KBM-7 (cell line): ENCODE measurements at regions of chr2 and their contacts with region 1.

Region 1: GRCh38 chr2:118855451-118856279 is 8.2 kb upstream of the EN1 start:
- DNase-seq: peak; percentile 87

Region 2: DNA sequence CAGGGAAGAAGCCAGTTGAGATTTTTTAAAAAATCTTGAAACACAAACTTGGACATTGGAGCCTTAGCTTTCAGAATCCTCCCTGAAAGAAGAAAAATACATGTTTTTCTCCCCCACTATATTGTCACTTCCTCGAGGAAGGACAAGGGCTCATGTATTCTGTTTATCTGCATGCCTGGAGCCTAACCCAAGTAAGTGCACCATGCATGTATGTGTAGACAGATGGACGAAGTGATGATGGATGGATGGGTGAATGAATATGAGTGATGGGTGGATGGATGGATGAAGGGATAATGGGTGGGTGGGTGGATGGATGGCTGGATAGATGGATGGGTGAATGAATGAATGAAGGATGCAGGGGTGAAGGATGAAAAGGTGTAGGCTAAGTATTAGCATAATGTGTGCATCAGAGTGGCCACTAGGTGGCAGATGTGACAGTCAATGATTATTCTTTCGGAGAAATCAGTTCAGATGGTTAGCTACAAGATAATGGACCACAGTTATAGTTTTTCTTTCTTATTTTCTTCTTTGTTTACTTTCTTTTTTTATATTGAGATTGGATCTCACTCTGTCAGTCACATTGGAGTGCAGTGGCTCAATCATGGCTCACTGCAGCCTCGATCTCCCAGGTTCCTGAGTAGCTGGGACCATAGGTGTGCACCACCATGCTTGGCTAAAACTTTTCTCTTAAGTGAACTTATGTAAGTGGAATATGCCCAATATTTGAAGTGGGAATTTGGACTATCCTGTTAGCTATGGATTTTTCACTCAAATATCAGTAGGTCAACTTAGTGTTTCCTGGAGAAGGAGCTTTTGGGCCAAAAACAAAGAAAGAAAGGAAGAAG is 823.3 kb before region 1 on chr2:
- in situ Hi-C with region 1: loop called (anchors 25 kb)
- DNase-seq: peak; percentile 38

Region 3: GRCh38 chr2:118249531-118249930 is 606.1 kb before region 1 on chr2:
- in situ Hi-C with region 1: loop called (anchors 25 kb)
- DNase-seq: peak; percentile 4

Region 4: DNA sequence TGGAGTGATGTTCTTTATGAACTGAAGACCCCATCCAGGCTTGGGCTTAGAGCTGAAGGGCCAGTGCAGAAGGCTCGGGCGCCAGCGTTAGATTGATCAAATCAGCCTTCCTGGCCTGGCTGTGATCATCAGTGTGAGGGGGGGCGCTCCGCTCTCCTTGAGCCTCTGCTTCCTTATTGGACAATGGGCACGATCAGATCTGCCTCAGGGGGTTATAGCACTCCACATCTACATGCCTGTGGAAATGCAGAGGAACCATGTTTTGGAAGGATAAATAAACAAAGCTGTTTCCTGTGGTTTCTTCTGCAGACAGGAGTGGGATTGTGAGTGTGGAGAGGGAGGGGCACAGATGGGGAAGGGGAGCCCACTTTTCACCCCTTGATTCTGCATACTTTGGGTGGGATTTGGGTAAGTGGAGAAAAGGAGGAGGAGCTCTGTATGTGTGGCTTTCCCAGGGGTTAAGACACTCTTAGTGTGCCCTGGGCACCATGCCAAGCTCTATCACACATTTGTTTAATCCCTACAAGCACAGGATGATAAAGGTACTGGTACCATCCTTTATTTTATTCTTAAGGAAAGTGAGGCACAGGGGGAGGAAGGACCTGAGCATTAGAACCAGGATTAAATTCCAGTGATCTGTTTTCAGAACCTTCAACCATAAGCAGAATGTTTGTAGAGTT is 158.7 kb before region 1 on chr2:
- in situ Hi-C with region 1: no loop called
- DNase-seq: no peak

Region 5: DNA sequence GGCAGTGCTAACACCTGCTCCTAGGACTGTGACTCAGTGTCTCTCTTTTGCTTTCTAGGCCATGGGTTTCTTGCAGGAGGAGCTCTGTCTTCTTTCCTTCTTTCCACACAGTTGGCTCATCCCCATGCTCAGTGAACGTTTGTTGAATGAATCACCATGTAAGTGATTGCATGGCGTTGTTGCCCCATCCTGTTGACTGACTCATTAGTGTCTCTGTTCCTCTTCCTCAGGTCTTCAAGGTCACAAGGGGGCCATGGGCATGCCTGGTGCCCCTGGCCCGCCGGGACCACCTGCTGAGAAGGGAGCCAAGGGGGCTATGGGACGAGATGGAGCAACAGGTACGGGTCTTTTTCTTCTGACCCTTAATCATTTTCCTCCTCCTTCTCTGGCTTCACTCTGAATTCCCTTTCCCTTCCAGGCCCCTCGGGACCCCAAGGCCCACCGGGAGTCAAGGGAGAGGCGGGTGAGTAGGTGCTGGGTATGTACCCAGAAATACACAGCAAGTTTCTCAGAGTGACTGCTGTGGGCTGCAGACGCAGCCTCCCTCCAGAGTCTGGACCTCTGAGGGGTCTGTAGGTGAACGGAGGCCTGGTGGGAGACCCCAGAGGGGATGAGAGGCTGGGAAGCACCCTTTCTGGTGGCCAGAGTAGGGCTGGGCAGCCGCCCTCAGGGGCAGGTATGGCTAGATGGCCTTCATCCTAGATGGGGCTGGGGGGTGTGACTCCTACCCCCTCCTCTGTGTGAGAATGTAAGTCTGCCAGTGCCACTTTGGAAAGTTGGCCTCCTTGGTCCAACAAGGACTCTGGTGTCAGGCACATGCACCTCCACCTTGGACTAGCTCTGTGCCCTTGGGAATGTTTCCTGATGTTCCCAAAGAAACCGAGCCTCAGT is 118.7 kb after region 1 on chr2:
- in situ Hi-C with region 1: no loop called
- DNase-seq: no peak